ENCODE measurements at regions of chr18 and their contacts with region 1.

Region 1: DNA sequence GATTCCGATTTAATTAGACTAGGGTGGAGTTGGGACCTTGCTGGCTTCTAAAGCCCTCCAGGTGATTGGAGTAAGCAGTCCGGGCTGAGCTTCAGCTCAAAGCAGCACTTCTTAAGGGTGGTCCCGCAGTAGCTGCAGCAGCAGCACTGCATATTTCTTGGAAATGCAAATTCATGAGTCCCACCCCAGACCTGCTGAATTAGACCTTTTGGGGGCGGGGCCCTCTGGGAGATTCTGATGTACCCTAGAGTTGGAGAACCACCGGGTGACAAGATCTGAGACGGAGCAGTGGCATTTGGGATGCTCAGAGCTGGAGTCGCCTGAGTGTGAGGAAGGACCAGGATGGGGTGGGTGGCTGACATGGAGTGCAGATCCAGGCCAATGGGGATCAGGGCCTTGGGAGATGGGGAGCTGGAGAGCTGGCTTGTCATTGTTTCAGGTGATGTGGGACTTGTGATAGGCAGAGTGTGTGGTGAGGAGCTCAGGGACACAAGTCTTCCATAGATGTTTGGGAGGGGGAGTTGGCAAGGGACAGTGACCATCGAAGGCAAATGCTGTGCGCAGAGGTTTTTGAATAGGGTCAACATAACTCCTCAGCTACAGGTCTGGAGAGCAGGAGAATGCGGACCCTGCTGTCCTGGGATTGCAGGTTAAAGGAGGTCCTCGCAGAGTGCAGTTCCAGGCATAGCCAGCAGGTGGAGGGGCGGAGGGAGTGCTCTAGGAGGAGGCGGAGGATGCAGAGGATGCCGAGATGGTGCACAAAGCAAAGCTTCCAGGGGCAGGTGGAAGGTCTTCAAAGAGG is 130.9 kb upstream of the RAB12 start:
- DNase-seq: peak; percentile 6
- H3K4me3 ChIP-seq: no peak overlapping the region
- H3K27ac ChIP-seq: no peak overlapping the region
- H3K27me3 ChIP-seq: peaks cover 24% of the 10 kb centered on the region
- CTCF ChIP-seq: peak; percentile 94

Region 2: GRCh38 chr18:7221424-7222155 is 1256.8 kb before region 1 on chr18:
- CTCF ChIA-PET with region 1: interaction called, 26 read pairs
- POLR2A ChIA-PET with region 1: no interaction called
- DNase-seq: peak; percentile 29
- H3K4me3 ChIP-seq: no peak overlapping the region
- H3K27ac ChIP-seq: no peak overlapping the region
- H3K27me3 ChIP-seq: no peaks in the 10 kb centered on the region
- CTCF ChIP-seq: peak; percentile 88

Region 3: DNA sequence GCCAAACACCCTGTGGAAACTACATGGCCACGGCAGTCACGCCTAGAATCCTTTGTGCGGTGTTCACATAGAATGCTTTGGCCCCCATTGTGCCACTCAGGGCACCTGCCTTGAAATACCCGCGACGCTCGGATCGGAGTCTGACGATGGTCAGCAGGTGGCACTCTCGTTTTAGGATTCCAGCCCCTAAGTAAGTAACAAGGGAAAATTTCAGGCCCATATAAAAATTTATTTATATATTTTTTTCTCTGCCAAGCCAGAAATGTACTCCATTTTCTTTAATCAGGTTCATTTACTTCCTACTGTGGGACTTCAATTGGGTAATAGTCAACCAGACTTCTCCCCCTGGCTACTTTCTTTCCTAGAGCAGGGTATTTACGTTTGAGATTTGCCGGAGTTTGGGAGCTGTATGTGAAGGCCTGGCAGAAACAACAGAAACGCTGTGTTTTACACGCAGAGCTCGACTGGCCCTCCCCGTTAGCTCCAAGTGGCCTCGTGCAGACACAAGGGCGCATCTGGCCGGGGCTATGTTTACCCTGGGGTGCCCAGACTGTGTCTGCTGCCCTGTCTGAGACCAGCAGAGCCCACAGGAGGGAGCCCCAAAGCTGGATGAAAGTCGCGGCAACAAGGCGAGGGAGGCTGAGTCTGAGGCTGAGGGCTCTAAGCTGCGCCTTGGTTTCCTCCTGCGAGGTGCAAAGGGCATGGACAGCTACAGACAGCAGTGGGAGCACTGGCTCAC is 1205.9 kb before region 1 on chr18:
- CTCF ChIA-PET with region 1: interaction called, 42 read pairs
- POLR2A ChIA-PET with region 1: no interaction called
- DNase-seq: peak; percentile 20
- H3K4me3 ChIP-seq: no peak overlapping the region
- H3K27ac ChIP-seq: no peak overlapping the region
- H3K27me3 ChIP-seq: no peaks in the 10 kb centered on the region
- CTCF ChIP-seq: peak; percentile 52

Region 4: DNA sequence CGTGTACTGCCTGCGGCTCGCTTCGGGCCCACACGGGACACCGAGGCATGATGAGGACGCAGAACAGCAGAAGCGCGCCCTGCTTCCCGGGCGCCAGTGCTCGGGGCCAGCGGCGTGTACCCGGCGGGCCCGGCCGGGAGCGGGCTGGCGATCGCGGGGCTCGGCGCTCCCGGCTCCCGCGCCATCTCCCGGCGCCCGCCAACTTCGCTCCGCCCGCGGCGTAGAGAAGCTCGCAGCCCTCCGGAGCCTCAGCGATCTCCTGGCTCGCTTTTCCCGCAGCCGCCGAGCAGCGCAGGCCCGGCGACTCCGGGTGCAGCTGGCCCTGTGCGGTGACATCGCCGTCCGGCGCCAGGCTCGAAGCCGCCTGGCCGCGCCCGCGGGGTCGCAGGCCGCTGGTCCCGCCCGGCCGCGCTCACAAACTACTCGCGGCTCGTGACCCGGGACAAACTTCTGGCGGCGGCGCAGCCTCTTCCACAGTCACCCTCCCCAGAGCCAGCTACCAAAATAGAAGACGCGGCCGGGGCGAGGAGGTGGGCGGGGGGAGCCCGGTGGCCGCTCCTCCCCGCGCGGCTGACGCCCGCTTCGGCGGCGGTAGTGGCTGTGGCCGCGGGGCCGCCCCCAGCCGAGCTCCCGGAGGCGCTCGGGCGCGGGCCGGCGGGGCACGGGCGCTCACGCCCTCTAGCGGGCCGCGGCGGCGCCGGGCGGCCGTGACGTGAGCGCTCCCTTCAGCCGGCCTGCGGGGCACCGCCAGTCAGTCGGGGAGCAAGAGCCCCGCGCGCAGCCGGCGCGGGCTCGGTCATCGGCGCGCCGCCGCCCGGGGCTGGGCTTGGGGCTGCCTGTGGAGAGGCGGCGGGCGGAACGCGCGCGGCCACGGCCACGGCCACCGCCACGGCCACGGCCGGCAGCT is 911.5 kb before region 1 on chr18 and contains the start of gene PTPRM:
- CTCF ChIA-PET with region 1: interaction called, 18 read pairs
- POLR2A ChIA-PET with region 1: no interaction called
- DNase-seq: no peak
- H3K4me3 ChIP-seq: peak within 1 kb of the TSS; percentile 73
- H3K27ac ChIP-seq: no peak within 1 kb of the TSS
- H3K27me3 ChIP-seq: no peaks in the 10 kb centered on the region
- CTCF ChIP-seq: peak; percentile 29; the same call in 1 of the 2 replicates
- polyA plus RNA-seq, gene PTPRM: 81.1 and 81.5 TPM in 2 replicates

Region 5: GRCh38 chr18:7789856-7790552 is 688.4 kb before region 1 on chr18:
- CTCF ChIA-PET with region 1: interaction called, 66 read pairs
- POLR2A ChIA-PET with region 1: interaction called, 3 read pairs
- DNase-seq: peak; percentile 26
- H3K4me3 ChIP-seq: no peak overlapping the region
- H3K27ac ChIP-seq: no peak overlapping the region
- H3K27me3 ChIP-seq: no peaks in the 10 kb centered on the region
- CTCF ChIP-seq: peak; percentile 62

Region 6: GRCh38 chr18:8443505-8443904 is 34.9 kb before region 1 on chr18:
- CTCF ChIA-PET with region 1: no interaction called
- POLR2A ChIA-PET with region 1: no interaction called
- DNase-seq: no peak
- H3K4me3 ChIP-seq: no peak overlapping the region
- H3K27ac ChIP-seq: no peak overlapping the region
- H3K27me3 ChIP-seq: no peaks in the 10 kb centered on the region
- CTCF ChIP-seq: no peak

Region 7: DNA sequence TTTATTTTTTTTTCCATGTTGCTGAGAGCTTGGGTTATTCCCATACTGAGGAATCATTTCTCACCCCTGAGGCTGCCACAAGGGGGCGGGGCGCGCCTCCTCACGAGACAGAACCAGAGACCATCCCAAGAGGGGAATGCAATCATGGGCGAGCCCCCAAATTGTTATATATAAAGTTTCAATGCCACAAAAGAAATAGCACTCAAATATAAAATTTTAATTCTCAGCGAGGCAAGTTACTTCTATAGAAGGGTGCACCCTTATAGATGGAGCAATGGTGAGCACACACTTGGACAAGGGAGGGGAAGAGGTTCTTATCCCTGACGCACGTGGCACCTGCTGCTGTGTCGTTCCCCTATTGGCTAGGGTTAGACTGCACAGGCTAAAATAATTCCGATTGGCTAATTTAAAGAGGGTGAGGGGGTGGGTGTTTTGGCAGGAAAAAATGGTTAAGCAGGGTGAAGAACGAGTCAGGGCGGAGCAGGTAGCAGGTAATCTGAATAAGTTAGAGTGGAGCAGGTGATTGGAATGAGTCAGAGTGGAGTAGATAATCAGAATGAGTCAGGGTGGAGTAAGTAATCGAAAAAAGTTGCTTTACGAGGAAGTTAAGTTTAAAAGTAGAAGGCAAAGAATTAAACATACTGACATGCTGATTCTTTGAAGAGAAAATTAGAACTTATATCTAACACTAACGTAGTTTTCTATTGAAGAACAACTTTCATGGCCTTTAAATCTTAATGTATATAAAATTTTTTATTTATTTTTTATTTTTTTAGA is 404.5 kb after region 1 on chr18:
- CTCF ChIA-PET with region 1: no interaction called
- POLR2A ChIA-PET with region 1: no interaction called
- DNase-seq: no peak
- H3K4me3 ChIP-seq: no peak overlapping the region
- H3K27ac ChIP-seq: no peak overlapping the region
- H3K27me3 ChIP-seq: no peaks in the 10 kb centered on the region
- CTCF ChIP-seq: no peak